H1 (cell line): ENCODE measurements at regions of chr12 and their contacts with region 1.

Region 1: GRCh38 chr12:16844875-16845274 is 238.9 kb upstream of the LMO3 start:
- DNase-seq: peak in 1 of 2 experiments; percentile 15
- H3K4me3 ChIP-seq: no peak overlapping the region
- H3K27ac ChIP-seq: no peak overlapping the region
- H3K4me1 ChIP-seq: no peaks in the 10 kb centered on the region
- H3K27me3 ChIP-seq: no peaks in the 10 kb centered on the region
- CTCF ChIP-seq: peak; percentile 32 to 70 (median 47)
- EP300 ChIP-seq: no peak
- POLR2A ChIP-seq: no peak
- RAD21 ChIP-seq: peak; percentile 70 to 72

Region 2: GRCh38 chr12:16833376-16834015 is 11.4 kb before region 1 on chr12:
- CTCF ChIA-PET with region 1: interaction called, 12 read pairs
- POLR2A ChIA-PET with region 1: no interaction called
- DNase-seq: no peak
- H3K4me3 ChIP-seq: no peak overlapping the region
- H3K27ac ChIP-seq: no peak overlapping the region
- H3K4me1 ChIP-seq: peaks cover 0 to 3% (median under 1%) of the 10 kb centered on the region in 4 experiments; a peak in 1 of 7 replicates
- H3K27me3 ChIP-seq: no peaks in the 10 kb centered on the region
- CTCF ChIP-seq: no peak
- EP300 ChIP-seq: no peak
- POLR2A ChIP-seq: no peak
- RAD21 ChIP-seq: no peak

Region 3: GRCh38 chr12:16857456-16857923 is 12.6 kb after region 1 on chr12:
- CTCF ChIA-PET with region 1: interaction called, 10 read pairs
- POLR2A ChIA-PET with region 1: no interaction called
- DNase-seq: no peak
- H3K4me3 ChIP-seq: no peak overlapping the region
- H3K27ac ChIP-seq: no peak overlapping the region
- H3K4me1 ChIP-seq: no peaks in the 10 kb centered on the region
- H3K27me3 ChIP-seq: no peaks in the 10 kb centered on the region
- CTCF ChIP-seq: no peak
- EP300 ChIP-seq: no peak
- POLR2A ChIP-seq: no peak
- RAD21 ChIP-seq: no peak

Region 4: GRCh38 chr12:16884061-16884460 is 39.2 kb after region 1 on chr12:
- CTCF ChIA-PET with region 1: no interaction called
- POLR2A ChIA-PET with region 1: no interaction called
- DNase-seq: no peak
- H3K4me3 ChIP-seq: no peak overlapping the region
- H3K27ac ChIP-seq: no peak overlapping the region
- H3K4me1 ChIP-seq: no peaks in the 10 kb centered on the region
- H3K27me3 ChIP-seq: no peaks in the 10 kb centered on the region
- CTCF ChIP-seq: no peak
- EP300 ChIP-seq: no peak
- POLR2A ChIP-seq: no peak
- RAD21 ChIP-seq: no peak